Keratinocyte (primary cell): ENCODE measurements at regions of chr18 and their contacts with region 1.

Region 1: GRCh38 chr18:47118981-47119380 is 31.3 kb downstream of the HDHD2 start:
- DNase-seq: no peak
- H3K4me3 ChIP-seq: no peak overlapping the region
- H3K27ac ChIP-seq: no peak overlapping the region
- H3K4me1 ChIP-seq: no peaks in the 10 kb centered on the region
- H3K27me3 ChIP-seq: no peaks in the 10 kb centered on the region
- CTCF ChIP-seq: no peak

Region 2: GRCh38 chr18:47191961-47192360 is 73.0 kb after region 1 on chr18:
- dilution Hi-C with region 1: loop called (anchors 5 kb)
- DNase-seq: no peak
- H3K4me3 ChIP-seq: no peak overlapping the region
- H3K27ac ChIP-seq: no peak overlapping the region
- H3K4me1 ChIP-seq: no peaks in the 10 kb centered on the region
- H3K27me3 ChIP-seq: no peaks in the 10 kb centered on the region
- CTCF ChIP-seq: no peak

Region 3: DNA sequence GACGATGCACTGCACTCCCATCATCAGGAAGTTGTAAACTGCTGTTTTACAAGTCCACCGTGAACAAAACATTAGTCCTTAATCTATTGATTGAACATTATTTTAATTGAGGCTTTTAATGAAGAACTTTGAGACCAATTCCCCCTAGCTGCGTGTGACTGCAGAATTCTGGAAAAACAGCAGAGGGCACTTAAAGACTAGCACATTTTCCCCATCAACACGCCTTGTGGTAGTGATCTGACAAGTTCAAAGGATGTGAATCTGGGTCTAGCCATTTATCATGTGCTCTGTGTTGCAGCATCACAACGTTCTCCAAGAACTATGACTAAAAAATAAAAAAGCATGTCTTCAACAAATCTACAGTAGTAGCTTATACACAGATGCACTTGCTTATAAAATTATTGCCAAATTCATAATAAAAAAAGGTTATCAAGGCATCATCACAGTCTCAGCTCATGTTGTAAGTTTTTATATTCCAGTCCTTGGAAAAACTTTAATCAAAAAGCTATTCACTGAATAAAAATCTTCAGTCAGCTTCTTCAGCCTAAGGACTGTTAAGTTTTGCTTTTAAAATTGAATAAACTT is 96.7 kb after region 1 on chr18:
- dilution Hi-C with region 1: no loop called
- DNase-seq: peak; percentile 5
- H3K4me3 ChIP-seq: no peak overlapping the region
- H3K27ac ChIP-seq: no peak overlapping the region
- H3K4me1 ChIP-seq: no peaks in the 10 kb centered on the region
- H3K27me3 ChIP-seq: peaks cover 8% of the 10 kb centered on the region
- CTCF ChIP-seq: peak; percentile 63 to 71 (median 63)